ENCODE measurements at regions of chr20 and their contacts with region 1.

Region 1: GRCh38 chr20:35306931-35307517 is 14.8 kb upstream of the FAM83C start:
- DNase-seq: peak; percentile 76
- H3K4me3 ChIP-seq: no peak overlapping the region
- H3K27ac ChIP-seq: no peak overlapping the region
- H3K4me1 ChIP-seq: peaks cover 21% of the 10 kb centered on the region
- H3K27me3 ChIP-seq: no peaks in the 10 kb centered on the region
- CTCF ChIP-seq: peak; percentile 23 to 49 (median 46)
- POLR2A ChIP-seq: no peak

Region 2: DNA sequence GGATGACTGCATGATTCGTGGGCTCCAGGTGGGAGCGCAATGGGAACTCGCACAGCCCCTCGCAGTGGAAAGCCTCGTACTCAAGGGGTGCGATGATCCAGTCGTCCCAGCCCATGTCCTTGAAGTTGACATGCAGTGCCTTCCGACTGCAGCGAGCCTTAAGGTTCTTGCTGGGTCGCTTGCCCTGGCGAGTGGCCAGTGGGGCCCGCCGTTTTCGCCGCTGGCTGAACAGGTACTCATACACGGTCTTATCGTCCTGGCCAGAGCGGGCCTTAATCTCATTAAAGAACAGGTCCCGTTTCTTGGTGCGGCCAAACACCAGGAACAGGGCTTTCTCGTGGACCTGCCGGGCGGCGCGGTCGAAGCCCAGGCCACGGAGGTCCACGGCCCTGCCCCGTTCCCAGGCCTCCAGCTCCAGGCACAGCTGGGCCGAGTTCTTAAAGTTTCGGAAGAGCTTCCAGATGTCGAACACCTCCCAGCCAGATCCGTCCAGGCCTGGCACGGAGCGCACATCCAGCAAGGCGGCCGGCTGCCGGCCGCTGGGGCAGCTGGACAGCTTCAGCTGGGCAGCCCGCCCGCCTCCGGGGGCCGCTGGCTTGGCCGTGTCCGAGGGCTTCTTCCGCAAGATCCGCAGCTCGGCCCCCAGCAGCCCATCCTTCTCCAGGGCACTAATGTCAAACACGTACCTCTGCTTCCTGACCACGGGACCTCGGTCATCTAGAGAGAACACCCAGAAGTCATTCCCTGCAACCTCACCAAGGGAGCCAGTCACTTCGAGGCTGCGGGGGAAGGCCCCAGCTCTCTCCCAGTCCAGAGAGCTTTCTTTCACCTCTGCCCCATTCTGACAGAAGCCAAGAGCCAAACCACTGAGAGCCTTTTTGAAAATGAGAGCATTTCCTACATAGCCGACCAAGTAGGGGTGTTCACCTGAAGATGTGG is 127.3 kb after region 1 on chr20:
- intact Hi-C with region 1: loop called (anchors 5 kb)
- DNase-seq: no peak
- H3K4me3 ChIP-seq: peak overlapping the region in 1 of 2 donors; percentile 0
- H3K27ac ChIP-seq: peak overlapping the region in 1 of 2 donors; percentile 30
- H3K4me1 ChIP-seq: peaks cover 2% of the 10 kb centered on the region
- H3K27me3 ChIP-seq: no peaks in the 10 kb centered on the region
- CTCF ChIP-seq: no peak
- POLR2A ChIP-seq: no peak

Region 3: GRCh38 chr20:35816339-35816738 is 509.3 kb after region 1 on chr20:
- intact Hi-C with region 1: no loop called
- DNase-seq: no peak
- H3K4me3 ChIP-seq: no peak overlapping the region
- H3K27ac ChIP-seq: no peak overlapping the region
- H3K4me1 ChIP-seq: no peaks in the 10 kb centered on the region
- H3K27me3 ChIP-seq: no peaks in the 10 kb centered on the region
- CTCF ChIP-seq: no peak
- POLR2A ChIP-seq: no peak

Measured in testis (tissue), 5 donors.